ENCODE measurements at regions of chr13 and their contacts with region 1.

Region 1: GRCh38 chr13:53612200-53612599 is 583.6 kb downstream of the OLFM4 start:
- DNase-seq: no peak
- ATAC-seq: peak; percentile 86
- H3K4me3 ChIP-seq: no peak overlapping the region
- H3K27ac ChIP-seq: no peak overlapping the region
- H3K4me1 ChIP-seq: no peaks in the 10 kb centered on the region
- H3K27me3 ChIP-seq: no peaks in the 10 kb centered on the region
- CTCF ChIP-seq: no peak
- EP300 ChIP-seq: no peak
- POLR2A ChIP-seq: no peak
- RAD21 ChIP-seq: no peak

Region 2: GRCh38 chr13:53622456-53622855 is 10.3 kb after region 1 on chr13:
- CTCF ChIA-PET with region 1: no interaction called
- POLR2A ChIA-PET with region 1: no interaction called
- RAD21 ChIA-PET with region 1: interaction called, 3 read pairs
- SMC1A ChIA-PET with region 1: interaction called, 12 read pairs
- in situ Hi-C with region 1: no loop called
- intact Hi-C with region 1: no loop called
- DNase-seq: no peak
- ATAC-seq: no peak
- H3K4me3 ChIP-seq: no peak overlapping the region
- H3K27ac ChIP-seq: no peak overlapping the region
- H3K4me1 ChIP-seq: no peaks in the 10 kb centered on the region
- H3K27me3 ChIP-seq: no peaks in the 10 kb centered on the region
- CTCF ChIP-seq: no peak
- EP300 ChIP-seq: no peak
- POLR2A ChIP-seq: no peak
- RAD21 ChIP-seq: no peak

Measured in GM12878 (cell line).